HAP-1 (cell line): ENCODE measurements at regions of chr5 and their contacts with region 1.

Region 1: DNA sequence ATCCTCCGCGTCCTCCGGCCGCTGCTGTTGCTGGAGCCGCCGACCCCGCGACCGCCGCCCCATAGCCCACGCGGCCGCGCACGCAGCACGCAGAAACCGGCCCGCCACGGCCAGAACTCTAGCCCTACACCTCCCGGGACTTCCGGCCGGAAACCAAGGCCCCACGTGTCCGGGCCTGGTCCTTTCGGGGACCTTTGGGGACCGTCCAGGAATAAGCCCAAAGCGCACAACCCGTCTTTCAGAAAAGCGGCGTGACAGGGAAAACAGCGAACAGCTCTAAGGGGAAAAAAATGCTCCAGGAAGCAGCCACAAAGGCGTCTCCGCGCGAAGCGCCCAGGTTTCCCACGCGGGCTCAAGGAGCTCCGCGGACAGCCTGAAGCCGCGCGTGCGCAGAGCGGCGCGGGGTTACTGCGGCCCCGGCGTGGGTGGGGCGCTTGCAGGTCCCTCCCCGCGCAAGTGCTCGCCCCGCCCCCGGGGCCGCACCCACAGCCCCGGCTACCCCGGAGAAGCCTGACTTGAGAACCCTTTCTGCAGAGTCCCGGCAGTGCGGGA is at the starts of genes NSUN2 and SRD5A1:
- DNase-seq: peak; percentile 77 to 89
- H3K4me3 ChIP-seq: peak within 1 kb of the TSS; percentile 83
- H3K4me1 ChIP-seq: peaks cover 6% of the 10 kb centered on the region
- H3K27me3 ChIP-seq: no peaks in the 10 kb centered on the region

Region 2: GRCh38 chr5:6483880-6484382 is 149.1 kb before region 1 on chr5:
- in situ Hi-C with region 1: no loop called
- DNase-seq: no peak
- H3K4me3 ChIP-seq: no peak overlapping the region
- H3K4me1 ChIP-seq: no peaks in the 10 kb centered on the region
- H3K27me3 ChIP-seq: no peaks in the 10 kb centered on the region

Region 3: DNA sequence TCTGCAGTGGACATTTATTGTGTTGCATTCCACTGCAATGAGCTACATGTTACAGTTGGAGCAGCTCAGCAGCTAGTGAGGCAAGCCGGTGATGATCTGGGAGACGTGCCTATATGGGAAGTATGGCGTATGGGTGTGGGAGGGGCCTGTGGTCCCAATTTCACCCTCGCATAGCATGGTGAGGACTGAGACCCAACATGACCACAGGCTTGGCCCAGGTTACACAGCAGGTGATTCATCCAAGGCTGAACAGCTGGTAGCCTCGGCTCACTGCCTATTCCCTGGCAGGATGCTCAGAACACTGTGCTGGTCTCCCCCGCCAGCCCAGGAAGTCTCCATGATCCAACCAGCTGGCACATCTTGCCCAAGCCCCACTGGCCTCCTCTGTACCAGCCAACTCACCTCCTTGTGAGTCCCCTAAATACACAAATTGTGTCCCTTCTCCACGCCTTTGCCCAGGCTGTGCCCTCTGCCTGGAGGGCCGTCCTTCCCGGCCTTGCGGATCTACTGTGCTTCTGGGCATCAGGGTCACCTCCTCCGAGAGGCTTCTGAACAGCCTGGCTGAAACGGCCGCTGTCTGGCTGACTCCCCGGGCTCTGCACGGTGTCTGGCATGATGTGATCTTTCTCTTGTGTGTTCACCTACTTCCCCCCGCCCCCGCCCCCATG is 81.6 kb before region 1 on chr5:
- in situ Hi-C with region 1: no loop called
- DNase-seq: no peak
- H3K4me3 ChIP-seq: no peak overlapping the region
- H3K4me1 ChIP-seq: no peaks in the 10 kb centered on the region
- H3K27me3 ChIP-seq: no peaks in the 10 kb centered on the region

Region 4: DNA sequence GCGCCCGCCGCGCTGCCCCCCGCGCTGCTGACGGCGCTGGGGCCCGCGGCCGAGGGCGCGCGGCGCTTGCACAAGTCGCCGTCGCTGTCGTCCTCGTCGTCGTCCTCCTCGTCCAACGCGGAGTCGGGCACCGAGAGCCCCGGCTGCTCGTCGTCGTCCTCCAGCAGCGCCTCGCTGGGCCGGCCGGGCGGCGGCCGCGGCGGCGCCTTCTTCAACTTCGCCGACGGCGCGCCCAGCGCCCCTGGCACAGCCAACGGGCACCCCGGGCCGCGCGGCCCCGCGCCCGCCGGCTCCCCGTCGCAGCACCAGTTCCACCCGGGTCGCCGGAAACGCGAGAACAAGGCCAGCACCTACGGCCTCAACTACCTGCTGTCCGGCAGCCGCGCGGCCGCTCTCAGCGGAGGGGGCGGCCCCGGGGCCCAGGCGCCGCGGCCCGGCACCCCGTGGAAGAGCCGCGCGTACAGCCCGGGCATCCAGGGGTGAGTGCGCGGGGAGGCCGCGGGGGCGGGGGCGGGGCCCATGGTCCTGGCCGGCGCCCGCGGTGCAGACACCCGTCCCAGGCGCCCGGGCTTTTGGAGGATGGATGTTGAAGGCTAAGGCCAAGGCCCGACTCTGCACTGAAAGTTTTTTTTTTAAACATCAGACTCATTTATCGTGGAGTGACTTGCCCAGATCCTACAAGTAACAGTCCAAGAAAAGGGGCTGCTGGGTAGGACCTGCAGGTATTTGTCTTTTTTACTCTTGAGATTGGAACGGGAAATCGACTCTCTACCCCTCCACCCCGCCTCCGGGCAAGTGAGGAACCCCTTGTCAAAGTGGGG is 81.4 kb after region 1 on chr5:
- in situ Hi-C with region 1: loop called (anchors 5 kb)
- DNase-seq: peak in 1 of 2 experiments; percentile 35
- H3K4me3 ChIP-seq: peak overlapping the region; percentile 53
- H3K4me1 ChIP-seq: peaks cover 7% of the 10 kb centered on the region; the same call in 1 of the 2 replicates
- H3K27me3 ChIP-seq: no peaks in the 10 kb centered on the region

Region 5: GRCh38 chr5:6820851-6821479 is 188.0 kb after region 1 on chr5:
- in situ Hi-C with region 1: no loop called
- DNase-seq: peak; percentile 38 to 63
- H3K4me3 ChIP-seq: no peak overlapping the region
- H3K4me1 ChIP-seq: no peaks in the 10 kb centered on the region
- H3K27me3 ChIP-seq: no peaks in the 10 kb centered on the region